HCT116 (cell line): ENCODE measurements at regions of chr7 and their contacts with region 1.

Region 1: DNA sequence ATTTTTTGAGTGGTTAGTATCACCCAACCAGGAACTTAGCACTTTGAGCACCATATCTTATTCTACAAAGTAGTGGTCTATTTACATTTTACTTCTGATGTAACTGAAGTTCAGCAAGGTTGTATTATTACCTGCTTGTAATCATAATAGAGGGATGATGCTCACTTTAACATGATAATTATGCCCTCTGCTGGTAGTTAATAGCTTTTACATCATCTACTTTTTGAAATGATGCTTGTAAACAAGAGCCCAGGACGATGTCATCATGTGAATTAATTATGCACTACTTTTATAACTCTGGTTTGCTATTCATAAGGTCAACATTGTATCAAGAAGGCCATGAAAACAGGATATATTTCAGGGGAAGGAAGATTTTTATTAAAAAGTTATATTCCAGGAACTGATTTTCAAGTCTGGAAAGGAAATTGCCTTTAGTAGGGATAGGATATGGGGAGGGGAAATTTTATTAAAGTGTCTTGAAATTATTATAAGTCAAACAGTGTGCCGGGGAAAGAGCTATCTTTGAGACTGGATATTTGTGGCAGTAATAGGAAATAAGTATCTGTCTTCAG is 80.3 kb upstream of the SCIN start:
- DNase-seq: peak; percentile 29
- ATAC-seq: peak; percentile 70
- H3K4me3 ChIP-seq: no peak overlapping the region
- H3K27ac ChIP-seq: no peak overlapping the region
- H3K4me1 ChIP-seq: no peaks in the 10 kb centered on the region
- H3K27me3 ChIP-seq: no peaks in the 10 kb centered on the region
- CTCF ChIP-seq: peak; percentile 33 to 75 (median 67); a peak in 5 of 6 replicates
- POLR2A ChIP-seq: no peak
- RAD21 ChIP-seq: peak; percentile 74

Region 2: GRCh38 chr7:11427686-11428273 is 1062.4 kb before region 1 on chr7:
- CTCF ChIA-PET with region 1: interaction called, 4 read pairs
- POLR2A ChIA-PET with region 1: no interaction called
- RAD21 ChIA-PET with region 1: no interaction called
- intact Hi-C with region 1: loop called (anchors 2 kb)
- DNase-seq: peak; percentile 53
- ATAC-seq: peak; percentile 73
- H3K4me3 ChIP-seq: no peak overlapping the region
- H3K27ac ChIP-seq: no peak overlapping the region
- H3K4me1 ChIP-seq: no peaks in the 10 kb centered on the region
- H3K27me3 ChIP-seq: no peaks in the 10 kb centered on the region
- CTCF ChIP-seq: peak; percentile 57 to 78 (median 71)
- POLR2A ChIP-seq: no peak
- RAD21 ChIP-seq: peak; percentile 82

Region 3: GRCh38 chr7:11831736-11832495 is 658.3 kb before region 1 on chr7 and contains the start of gene THSD7A:
- CTCF ChIA-PET with region 1: interaction called, 18 read pairs
- POLR2A ChIA-PET with region 1: no interaction called
- RAD21 ChIA-PET with region 1: no interaction called
- intact Hi-C with region 1: loop called (anchors 1 kb)
- DNase-seq: no peak
- ATAC-seq: peak; percentile 90
- H3K4me3 ChIP-seq: peak within 1 kb of the TSS; percentile 50 to 71
- H3K27ac ChIP-seq: no peak within 1 kb of the TSS
- H3K4me1 ChIP-seq: peaks cover 0 to 15% of the 10 kb centered on the region in 2 experiments; a peak in 1 of 4 replicates
- H3K27me3 ChIP-seq: no peaks in the 10 kb centered on the region
- CTCF ChIP-seq: peak in 1 of 3 experiments; percentile 13; a peak in 1 of 6 replicates
- POLR2A ChIP-seq: no peak
- RAD21 ChIP-seq: peak; percentile 19
- total RNA-seq, gene THSD7A: 0.05 TPM

Region 4: DNA sequence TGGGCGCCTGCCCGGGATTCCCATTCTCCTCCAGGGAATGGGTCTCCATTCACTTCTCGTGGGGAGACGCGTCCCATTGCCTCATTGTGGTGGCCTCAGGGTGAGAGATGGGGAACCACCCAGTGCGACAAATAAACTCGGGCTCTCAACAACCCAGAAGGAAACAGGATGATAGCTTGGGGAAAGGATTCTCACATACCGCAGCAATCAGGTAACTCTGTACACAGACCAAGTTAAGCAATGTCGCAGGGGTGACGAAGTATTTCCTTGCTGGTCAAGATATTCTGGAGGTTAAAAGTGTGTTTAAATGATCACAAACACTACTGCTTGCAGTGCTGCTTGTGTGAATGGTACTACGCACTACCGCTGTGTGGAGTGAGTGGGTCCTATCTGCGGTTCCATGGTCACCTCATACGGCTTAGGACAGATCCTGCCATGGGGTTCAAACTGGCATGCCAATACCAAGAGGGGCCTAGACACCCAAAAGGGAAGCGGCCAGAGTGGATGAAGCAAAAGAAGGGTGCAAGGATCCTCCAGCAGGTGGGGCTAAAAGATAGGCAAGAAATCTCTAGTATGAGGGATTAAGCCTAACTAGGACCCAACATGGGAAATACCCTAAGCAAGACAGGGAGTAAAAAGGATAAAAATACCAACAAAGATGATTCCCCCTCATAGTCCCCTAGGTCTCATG is 422.9 kb before region 1 on chr7:
- CTCF ChIA-PET with region 1: interaction called, 6 read pairs
- POLR2A ChIA-PET with region 1: no interaction called
- RAD21 ChIA-PET with region 1: no interaction called
- intact Hi-C with region 1: loop called (anchors 2 kb)
- DNase-seq: peak; percentile 58
- ATAC-seq: peak; percentile 71
- H3K4me3 ChIP-seq: peak overlapping the region in 1 of 2 experiments; percentile 20; a peak in 1 of 4 replicates
- H3K27ac ChIP-seq: no peak overlapping the region
- H3K4me1 ChIP-seq: peaks cover 0 to 31% of the 10 kb centered on the region in 2 experiments; a peak in 2 of 4 replicates
- H3K27me3 ChIP-seq: no peaks in the 10 kb centered on the region
- CTCF ChIP-seq: peak; percentile 65 to 74 (median 68)
- POLR2A ChIP-seq: no peak
- RAD21 ChIP-seq: peak; percentile 89

Region 5: DNA sequence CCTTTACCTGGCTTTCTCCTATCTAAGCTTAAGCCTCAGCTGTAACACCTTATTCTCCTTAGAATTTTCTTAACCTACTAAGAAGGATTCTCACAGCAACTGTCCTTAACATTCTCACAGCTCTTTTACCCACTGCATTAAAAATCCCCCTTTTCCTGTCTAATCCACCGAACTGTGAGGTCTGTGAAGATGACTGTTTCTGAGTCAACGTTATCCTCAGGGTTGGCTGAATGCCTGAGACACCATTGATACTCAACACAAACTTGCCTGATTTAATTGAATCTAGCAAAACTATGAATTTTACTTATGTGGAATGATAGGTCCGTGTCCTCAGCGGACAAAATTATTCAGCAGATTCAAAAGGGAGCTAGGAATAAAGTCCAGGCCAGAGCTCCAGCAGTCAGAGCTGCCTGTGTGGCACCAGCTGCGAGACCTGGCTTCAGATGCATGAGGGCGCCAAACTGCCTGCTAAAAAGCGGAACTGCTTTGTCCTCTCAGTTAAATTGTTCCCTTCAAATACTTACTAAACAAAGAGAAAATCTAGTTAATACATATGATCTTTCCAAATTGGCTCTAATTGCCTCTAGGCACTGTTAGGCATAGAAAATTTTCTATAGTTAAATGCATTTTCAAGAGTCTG is 53.2 kb before region 1 on chr7:
- CTCF ChIA-PET with region 1: interaction called, 16 read pairs
- POLR2A ChIA-PET with region 1: no interaction called
- RAD21 ChIA-PET with region 1: interaction called in 1 of 2 experiments, 3 read pairs
- intact Hi-C with region 1: loop called (anchors 10 kb)
- DNase-seq: no peak
- ATAC-seq: peak; percentile 90
- H3K4me3 ChIP-seq: no peak overlapping the region
- H3K27ac ChIP-seq: no peak overlapping the region
- H3K4me1 ChIP-seq: peaks cover 0 to 7% of the 10 kb centered on the region in 2 experiments; a peak in 1 of 4 replicates
- H3K27me3 ChIP-seq: no peaks in the 10 kb centered on the region
- CTCF ChIP-seq: peak; percentile 11 to 49 (median 32); a peak in 3 of 6 replicates
- POLR2A ChIP-seq: no peak
- RAD21 ChIP-seq: peak; percentile 49

Region 6: DNA sequence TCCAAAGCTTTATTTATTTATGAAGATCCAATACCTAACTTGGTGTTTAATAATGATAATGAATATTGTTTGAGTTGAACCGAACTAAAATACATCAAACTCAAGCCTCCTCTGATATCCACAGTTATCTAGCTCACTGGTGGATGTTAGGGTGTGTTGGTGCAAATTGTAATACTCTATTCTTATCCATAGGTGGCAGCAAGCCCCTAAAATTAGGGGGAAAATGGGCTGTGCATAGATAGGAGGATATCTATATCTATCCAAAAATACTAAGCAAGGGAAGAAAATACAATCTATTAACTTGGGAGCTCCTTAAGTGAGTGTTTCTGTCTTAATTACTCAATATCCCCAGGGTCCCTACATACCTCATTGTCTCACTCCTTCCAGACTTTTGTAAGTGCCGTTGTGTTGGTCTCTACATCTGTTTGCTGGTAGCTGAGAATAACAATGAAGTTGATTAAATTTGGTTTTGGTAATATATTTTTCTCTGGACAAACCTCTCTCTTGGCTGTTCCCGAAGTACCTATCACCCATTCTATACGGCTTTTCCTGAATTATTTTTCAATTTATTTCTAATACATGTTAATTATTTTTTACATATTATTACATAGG is 31.6 kb before region 1 on chr7:
- CTCF ChIA-PET with region 1: interaction called, 86 read pairs
- POLR2A ChIA-PET with region 1: interaction called, 7 read pairs
- RAD21 ChIA-PET with region 1: interaction called, 13 to 18 read pairs
- intact Hi-C with region 1: loop called (anchors 1 kb)
- DNase-seq: peak; percentile 23
- ATAC-seq: peak; percentile 100
- H3K4me3 ChIP-seq: no peak overlapping the region
- H3K27ac ChIP-seq: no peak overlapping the region
- H3K4me1 ChIP-seq: peaks cover 0 to 2% of the 10 kb centered on the region in 2 experiments; a peak in 2 of 4 replicates
- H3K27me3 ChIP-seq: no peaks in the 10 kb centered on the region
- CTCF ChIP-seq: peak; percentile 67 to 82 (median 71); a peak in 5 of 6 replicates
- POLR2A ChIP-seq: no peak
- RAD21 ChIP-seq: peak; percentile 82

Region 7: GRCh38 chr7:12475362-12476063 is 14.7 kb before region 1 on chr7:
- CTCF ChIA-PET with region 1: interaction called, 12 read pairs
- POLR2A ChIA-PET with region 1: interaction called, 3 read pairs
- RAD21 ChIA-PET with region 1: no interaction called
- intact Hi-C with region 1: no loop called
- DNase-seq: peak; percentile 23
- ATAC-seq: peak; percentile 68
- H3K4me3 ChIP-seq: no peak overlapping the region
- H3K27ac ChIP-seq: no peak overlapping the region
- H3K4me1 ChIP-seq: peaks cover 0 to 9% of the 10 kb centered on the region in 2 experiments; a peak in 2 of 4 replicates
- H3K27me3 ChIP-seq: no peaks in the 10 kb centered on the region
- CTCF ChIP-seq: no peak
- POLR2A ChIP-seq: no peak
- RAD21 ChIP-seq: no peak